ENCODE measurements at regions of chr16 and their contacts with region 1.

Region 1: GRCh38 chr16:89484923-89485679 is 5.3 kb downstream of the ANKRD11 start:
- DNase-seq: peak; percentile 36
- H3K4me3 Mint-ChIP-seq: peak overlapping the region; percentile 60
- H3K27ac Mint-ChIP-seq: peak overlapping the region; percentile 75
- H3K4me1 Mint-ChIP-seq: peaks cover 81% of the 10 kb centered on the region
- H3K27me3 Mint-ChIP-seq: no peaks in the 10 kb centered on the region

Region 2: DNA sequence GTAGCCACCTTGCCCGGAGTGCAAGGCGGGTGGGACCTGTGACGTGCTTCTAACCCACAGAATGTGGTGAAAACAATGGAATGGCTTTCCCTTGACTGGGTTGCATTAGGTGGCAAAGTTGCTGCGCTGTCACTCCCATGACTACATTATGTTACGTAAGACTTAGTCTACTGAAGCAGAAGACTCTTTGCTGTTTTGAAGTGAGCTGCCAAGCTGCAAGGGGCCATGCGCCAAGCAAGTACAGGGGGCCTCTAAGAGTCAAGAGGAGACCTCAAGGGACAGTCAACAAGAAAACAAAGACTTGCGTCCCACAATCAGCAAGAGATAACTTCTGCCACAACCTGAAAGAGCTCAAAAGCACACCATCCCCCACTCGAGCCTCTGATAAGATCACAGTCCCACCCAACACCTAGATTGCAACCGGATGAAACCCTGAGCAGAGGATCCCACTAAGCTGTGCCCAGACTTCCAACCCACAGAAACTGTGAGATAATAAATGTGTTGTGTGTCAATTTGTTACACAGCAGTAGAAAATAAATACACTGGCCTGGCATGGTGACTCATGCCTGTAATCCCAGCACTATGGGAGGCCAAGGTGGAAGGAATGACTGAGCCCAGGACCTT is 11.2 kb before region 1 on chr16:
- CTCF ChIA-PET with region 1: interaction called, 10 read pairs
- POLR2A ChIA-PET with region 1: interaction called, 17 read pairs
- DNase-seq: no peak
- H3K4me3 Mint-ChIP-seq: no peak overlapping the region
- H3K27ac Mint-ChIP-seq: peak overlapping the region; percentile 48
- H3K4me1 Mint-ChIP-seq: peaks cover 79% of the 10 kb centered on the region
- H3K27me3 Mint-ChIP-seq: no peaks in the 10 kb centered on the region

Region 3: GRCh38 chr16:89525146-89525913 is 40.2 kb after region 1 on chr16:
- CTCF ChIA-PET with region 1: no interaction called
- POLR2A ChIA-PET with region 1: no interaction called
- DNase-seq: no peak
- H3K4me3 Mint-ChIP-seq: no peak overlapping the region
- H3K27ac Mint-ChIP-seq: no peak overlapping the region
- H3K4me1 Mint-ChIP-seq: no peaks in the 10 kb centered on the region
- H3K27me3 Mint-ChIP-seq: no peaks in the 10 kb centered on the region

Region 4: DNA sequence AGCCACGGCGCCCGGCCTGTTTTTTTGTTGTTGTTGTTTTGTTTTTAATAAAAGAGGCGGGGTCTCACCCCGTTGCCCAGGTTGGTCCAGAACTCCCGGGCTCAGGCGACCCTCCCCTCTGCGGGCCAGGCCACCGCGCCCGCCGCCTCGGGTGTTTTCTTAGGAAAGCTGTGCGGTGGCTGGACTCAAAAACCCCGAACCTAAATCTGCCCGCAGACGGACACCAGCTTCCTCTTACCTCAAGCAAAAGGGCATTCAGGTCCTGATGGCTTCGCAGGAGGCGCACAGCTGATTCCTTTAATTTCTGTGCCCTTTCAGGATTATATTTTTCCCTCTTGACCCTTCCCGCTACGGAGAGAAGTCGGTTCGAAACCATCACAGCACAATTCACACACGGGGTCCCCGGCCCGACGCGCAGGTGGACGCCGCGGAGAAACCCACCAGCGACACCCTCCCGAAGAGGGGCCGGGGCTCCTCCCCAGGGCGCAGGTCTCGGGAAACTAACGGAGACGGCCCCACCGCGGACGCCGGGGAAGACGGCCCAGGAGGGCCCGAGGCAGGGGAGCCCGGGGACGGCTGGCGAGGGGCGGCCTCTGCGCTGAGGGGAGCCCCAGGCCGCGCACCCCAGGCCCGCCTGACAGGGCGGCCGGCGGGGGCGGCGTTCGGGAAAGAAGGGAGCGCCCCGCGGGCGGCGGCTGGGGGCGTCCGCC is 330.7 kb after region 1 on chr16:
- CTCF ChIA-PET with region 1: no interaction called
- POLR2A ChIA-PET with region 1: no interaction called
- DNase-seq: no peak
- H3K4me3 Mint-ChIP-seq: peak overlapping the region; percentile 91
- H3K27ac Mint-ChIP-seq: peak overlapping the region; percentile 69
- H3K4me1 Mint-ChIP-seq: peaks cover 45% of the 10 kb centered on the region
- H3K27me3 Mint-ChIP-seq: no peaks in the 10 kb centered on the region

Measured in activated CD4-positive, alpha-beta memory T cell treated with anti-CD3 and anti-CD28 coated beads, Interleukin-2, amount 10 ng/mL, durations not matched to agents 7 days and 5 days (primary cell).